ENCODE measurements at regions of chr14 and their contacts with region 1.

Region 1: DNA sequence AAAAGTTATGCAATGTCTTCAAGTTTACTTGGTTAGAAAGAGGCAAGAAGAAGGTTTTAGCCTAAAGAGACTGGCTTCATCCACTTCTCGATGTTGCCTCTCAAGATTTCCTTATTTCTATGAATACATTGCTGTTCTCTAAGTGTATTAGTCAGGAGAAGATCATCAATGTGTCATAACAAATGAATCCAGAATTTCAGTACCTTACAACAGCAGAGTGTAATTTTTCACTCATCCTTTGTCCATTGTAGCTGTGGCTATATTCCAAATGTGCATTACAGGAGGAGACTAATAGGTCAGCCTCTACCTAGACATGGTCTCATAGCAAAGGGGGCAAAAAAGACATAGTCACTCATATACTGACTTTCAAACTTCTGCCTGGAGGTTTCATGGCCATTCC is 579.1 kb downstream of the PRKD1 start:
- DNase-seq: no peak
- ATAC-seq: no peak

Region 2: GRCh38 chr14:28746247-28746646 is 602.3 kb before region 1 on chr14:
- intact Hi-C with region 1: loop called (anchors 5 kb)
- DNase-seq: no peak
- ATAC-seq: no peak

Region 3: GRCh38 chr14:28966416-28967233 is 381.9 kb before region 1 on chr14:
- intact Hi-C with region 1: no loop called
- DNase-seq: no peak
- ATAC-seq: no peak